ENCODE measurements at regions of chr3 and their contacts with region 1.

Region 1: DNA sequence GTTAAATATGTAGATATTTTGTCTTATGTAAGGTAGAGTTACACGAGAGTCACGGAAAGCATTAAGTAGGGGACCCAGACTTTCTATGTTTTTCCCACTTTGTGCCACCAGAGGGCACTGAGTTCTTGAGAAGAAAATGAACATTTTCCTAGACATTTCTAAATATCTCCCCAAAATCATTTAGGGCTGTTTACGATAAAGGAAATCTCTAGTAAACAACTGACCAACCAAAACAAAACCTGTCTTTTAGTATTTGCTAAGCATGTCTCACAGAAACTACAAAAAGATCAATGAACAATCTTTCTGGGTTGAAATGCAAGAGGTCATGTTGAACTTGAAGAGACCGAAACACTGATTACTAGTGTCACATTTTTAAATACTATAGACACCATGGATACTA is 16.1 kb downstream of the POU1F1 start:
- DNase-seq: peak in 6 of 9 donors; percentile 1 to 46 (median 24)
- ATAC-seq: no peak
- H3K4me3 ChIP-seq: no peak overlapping the region
- H3K4me3 Mint-ChIP-seq: no peak overlapping the region
- H3K27ac ChIP-seq: no peak overlapping the region
- H3K27ac Mint-ChIP-seq: no peak overlapping the region
- H3K4me1 ChIP-seq: no peaks in the 10 kb centered on the region
- H3K4me1 Mint-ChIP-seq: peaks cover 0 to 12% (median 6%) of the 10 kb centered on the region in 7 donors
- H3K27me3 ChIP-seq: no peaks in the 10 kb centered on the region
- H3K27me3 Mint-ChIP-seq: peaks cover 0 to 13% (median 0%) of the 10 kb centered on the region in 5 donors

Region 2: GRCh38 chr3:87227104-87227834 is 33.0 kb before region 1 on chr3 and contains the start of gene CHMP2B:
- CTCF ChIA-PET with region 1: no interaction called
- POLR2A ChIA-PET with region 1: no interaction called
- intact Hi-C with region 1: loop called (anchors 2 to 5 kb)
- DNase-seq: peak; percentile 86 to 91 (median 89)
- ATAC-seq: peak; percentile 94
- H3K4me3 ChIP-seq: peak within 1 kb of the TSS; percentile 81
- H3K4me3 Mint-ChIP-seq: peak within 1 kb of the TSS; percentile 91 to 99 (median 98)
- H3K27ac ChIP-seq: peak within 1 kb of the TSS; percentile 95
- H3K27ac Mint-ChIP-seq: peak within 1 kb of the TSS; percentile 96 to 99 (median 98)
- H3K4me1 ChIP-seq: peaks cover 12 to 17% of the 10 kb centered on the region in 2 donors
- H3K4me1 Mint-ChIP-seq: peaks cover 26 to 61% (median 42%) of the 10 kb centered on the region in 7 donors
- H3K27me3 ChIP-seq: no peaks in the 10 kb centered on the region
- H3K27me3 Mint-ChIP-seq: peaks cover 7 to 28% (median 8%) of the 10 kb centered on the region in 5 donors
- total RNA-seq, gene CHMP2B: 20.7 to 27.4 (median 23.4) TPM

Region 3: DNA sequence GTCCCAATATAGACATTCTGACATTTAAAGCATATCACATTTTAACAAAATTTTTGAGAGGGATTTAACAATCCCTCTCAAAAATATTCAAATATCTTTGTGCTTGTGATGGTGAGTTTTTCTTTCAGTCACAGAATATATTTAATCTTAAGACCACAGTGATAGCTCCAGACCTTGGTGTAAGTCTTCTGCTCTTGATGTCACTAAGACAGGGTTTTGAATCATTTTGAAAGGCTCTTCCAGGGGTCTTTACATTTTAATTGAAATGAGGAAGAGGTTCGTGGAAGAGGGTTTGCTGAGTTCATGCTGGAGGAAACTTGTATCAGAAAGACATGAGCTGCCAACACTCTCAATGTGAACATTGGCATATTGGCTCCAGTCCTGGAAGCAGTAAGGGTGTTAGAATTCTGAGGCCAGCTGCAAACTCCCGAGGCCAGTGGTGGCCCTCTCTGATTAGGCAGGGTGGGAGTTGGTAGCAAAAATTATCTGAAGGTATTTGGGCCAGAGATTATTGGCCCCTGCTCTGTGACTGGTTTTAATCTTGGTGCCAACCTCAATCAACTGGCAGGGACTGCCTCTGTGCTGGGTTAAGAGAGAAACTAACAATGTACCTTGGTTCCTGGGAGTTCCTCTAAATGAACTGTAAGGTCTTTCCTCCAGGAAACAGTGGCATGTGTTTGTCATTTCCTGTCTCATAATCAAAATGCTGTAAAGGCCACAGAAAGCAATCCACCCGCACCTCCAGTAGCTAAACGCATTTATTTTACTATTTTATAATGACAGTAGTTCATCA is 10.8 kb after region 1 on chr3:
- CTCF ChIA-PET with region 1: interaction called, 8 read pairs
- POLR2A ChIA-PET with region 1: interaction called, 4 read pairs
- intact Hi-C with region 1: loop called in 1 of 2 experiments (anchors 1 kb)
- DNase-seq: peak in 2 of 9 donors; percentile 4 to 6
- ATAC-seq: peak; percentile 71
- H3K4me3 ChIP-seq: no peak overlapping the region
- H3K4me3 Mint-ChIP-seq: peak overlapping the region in 5 of 10 donors; percentile 3 to 65 (median 36)
- H3K27ac ChIP-seq: no peak overlapping the region
- H3K27ac Mint-ChIP-seq: peak overlapping the region in 3 of 9 donors; percentile 29 to 77 (median 42)
- H3K4me1 ChIP-seq: no peaks in the 10 kb centered on the region
- H3K4me1 Mint-ChIP-seq: peaks cover 7 to 51% (median 26%) of the 10 kb centered on the region in 7 donors
- H3K27me3 ChIP-seq: no peaks in the 10 kb centered on the region
- H3K27me3 Mint-ChIP-seq: peaks cover 0 to 4% (median 0%) of the 10 kb centered on the region in 5 donors

Region 4: DNA sequence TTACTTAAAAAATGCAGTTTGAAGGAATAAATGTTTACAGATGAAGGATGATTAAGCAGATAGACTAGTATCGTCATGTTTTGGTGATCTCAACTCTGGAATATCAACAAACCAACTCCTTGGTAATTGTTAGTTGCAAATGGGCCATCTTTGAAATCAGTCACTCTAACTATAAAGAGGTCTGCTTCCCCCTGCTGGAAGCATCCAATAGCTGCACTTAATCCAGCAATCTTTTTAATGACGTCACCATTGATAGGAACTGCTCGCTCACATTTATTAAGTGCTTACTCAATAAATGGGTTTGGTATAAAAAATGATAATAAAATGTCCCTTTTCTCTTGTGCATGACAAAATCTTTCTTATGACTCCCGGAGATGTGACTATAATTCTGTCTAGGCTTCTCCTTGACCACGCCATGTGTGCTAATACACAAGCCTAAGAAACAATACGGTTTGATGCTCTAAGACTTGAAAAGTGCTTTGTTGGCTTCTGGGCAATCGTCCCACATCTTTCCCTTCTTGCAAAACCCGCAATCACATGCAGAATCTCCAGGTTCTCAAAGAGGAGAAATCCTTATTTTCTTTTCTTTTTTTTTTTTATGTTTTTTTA is 243.7 kb after region 1 on chr3:
- CTCF ChIA-PET with region 1: no interaction called
- POLR2A ChIA-PET with region 1: no interaction called
- intact Hi-C with region 1: loop called in 1 of 2 experiments (anchors 1 kb)
- DNase-seq: peak in 1 of 9 donors; percentile 11
- ATAC-seq: peak; percentile 57
- H3K4me3 ChIP-seq: no peak overlapping the region
- H3K4me3 Mint-ChIP-seq: no peak overlapping the region
- H3K27ac ChIP-seq: no peak overlapping the region
- H3K27ac Mint-ChIP-seq: no peak overlapping the region
- H3K4me1 ChIP-seq: no peaks in the 10 kb centered on the region
- H3K4me1 Mint-ChIP-seq: no peaks in the 10 kb centered on the region
- H3K27me3 ChIP-seq: no peaks in the 10 kb centered on the region
- H3K27me3 Mint-ChIP-seq: no peaks in the 10 kb centered on the region

Region 5: DNA sequence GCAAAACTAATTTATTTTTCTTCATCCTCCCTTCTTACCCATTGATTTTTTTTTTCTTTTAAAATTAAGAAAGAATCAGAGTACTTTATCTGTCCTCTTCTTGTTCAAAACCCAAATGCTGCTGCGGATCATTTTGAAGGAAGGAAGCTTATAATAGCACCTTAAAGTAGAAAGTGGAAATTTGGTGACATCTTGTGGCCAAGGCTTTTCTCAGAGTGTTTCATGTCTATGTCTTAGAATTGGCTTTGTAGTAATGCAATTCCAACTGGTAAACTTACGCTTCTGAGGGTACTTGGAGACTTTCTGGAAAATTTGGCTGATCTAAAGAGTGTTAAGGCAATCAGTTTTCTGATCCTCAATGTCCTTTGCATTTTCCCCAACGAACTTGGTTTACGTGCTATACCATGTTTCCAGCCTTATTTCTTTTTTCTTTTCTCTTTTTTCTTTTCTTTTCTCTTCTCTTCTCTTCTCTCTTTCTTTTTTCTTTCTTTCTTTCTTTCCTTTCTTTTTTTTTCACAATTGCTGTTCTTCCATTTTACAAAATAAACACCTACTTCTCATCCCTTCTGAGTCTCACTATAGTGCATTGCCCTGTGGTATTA is 920.2 kb after region 1 on chr3:
- CTCF ChIA-PET with region 1: no interaction called
- POLR2A ChIA-PET with region 1: no interaction called
- intact Hi-C with region 1: loop called in 1 of 2 experiments (anchors 1 kb)
- DNase-seq: peak in 7 of 9 donors; percentile 9 to 38 (median 30)
- ATAC-seq: no peak
- H3K4me3 ChIP-seq: no peak overlapping the region
- H3K4me3 Mint-ChIP-seq: no peak overlapping the region
- H3K27ac ChIP-seq: no peak overlapping the region
- H3K27ac Mint-ChIP-seq: no peak overlapping the region
- H3K4me1 ChIP-seq: no peaks in the 10 kb centered on the region
- H3K4me1 Mint-ChIP-seq: peaks cover 0 to 8% (median 0%) of the 10 kb centered on the region in 7 donors
- H3K27me3 ChIP-seq: no peaks in the 10 kb centered on the region
- H3K27me3 Mint-ChIP-seq: peaks cover 0 to 14% (median 4%) of the 10 kb centered on the region in 5 donors

Measured in naive thymus-derived CD4-positive, alpha-beta T cell (primary cell).